ENCODE measurements at regions of chr9 and their contacts with region 1.

Region 1: DNA sequence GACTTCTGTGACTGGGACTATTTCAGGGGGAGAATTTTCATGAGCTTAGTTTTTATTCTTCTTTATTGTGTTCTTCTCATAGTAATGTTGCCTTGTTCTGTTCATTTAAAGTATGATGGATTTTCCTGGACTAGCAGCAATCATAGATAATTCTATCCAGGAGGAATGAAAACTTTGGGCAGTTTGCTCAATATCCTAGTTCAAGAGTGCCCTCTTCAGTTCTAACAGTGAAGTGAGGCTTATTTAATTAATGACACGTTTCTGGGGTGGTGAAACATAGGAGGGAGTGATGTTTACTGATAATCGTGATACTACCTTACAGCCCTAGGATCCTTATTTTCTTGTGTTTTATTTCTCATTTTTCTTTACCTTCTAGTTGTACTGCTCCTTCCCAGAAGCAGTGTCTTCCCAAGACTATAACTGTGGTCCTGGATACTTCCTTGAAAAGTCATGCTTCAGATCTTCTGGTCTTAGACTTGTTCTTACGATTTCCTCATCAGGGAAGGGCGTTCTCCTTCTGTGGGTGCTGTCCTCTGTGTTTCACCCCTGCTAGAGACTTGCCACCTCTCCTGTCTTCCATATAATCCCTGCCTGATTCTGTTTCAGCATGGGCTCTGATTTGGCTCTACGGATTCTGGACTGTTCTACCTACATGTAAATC is 57.4 kb downstream of the CFAP95 start:
- DNase-seq: peak; percentile 37
- H3K4me3 ChIP-seq: no peak overlapping the region
- H3K27ac ChIP-seq: no peak overlapping the region
- H3K4me1 ChIP-seq: no peaks in the 10 kb centered on the region
- H3K27me3 ChIP-seq: no peaks in the 10 kb centered on the region
- CTCF ChIP-seq: peak; percentile 64 to 72

Region 2: GRCh38 chr9:69056191-69056815 is 821.7 kb before region 1 on chr9:
- CTCF ChIA-PET with region 1: no interaction called
- dilution Hi-C with region 1: no loop called
- in situ Hi-C with region 1: loop called in 1 of 2 experiments (anchors 25 kb)
- intact Hi-C with region 1: loop called (anchors 5 kb)
- DNase-seq: no peak
- H3K4me3 ChIP-seq: no peak overlapping the region
- H3K27ac ChIP-seq: no peak overlapping the region
- H3K4me1 ChIP-seq: no peaks in the 10 kb centered on the region
- H3K27me3 ChIP-seq: no peaks in the 10 kb centered on the region
- CTCF ChIP-seq: no peak

Region 3: DNA sequence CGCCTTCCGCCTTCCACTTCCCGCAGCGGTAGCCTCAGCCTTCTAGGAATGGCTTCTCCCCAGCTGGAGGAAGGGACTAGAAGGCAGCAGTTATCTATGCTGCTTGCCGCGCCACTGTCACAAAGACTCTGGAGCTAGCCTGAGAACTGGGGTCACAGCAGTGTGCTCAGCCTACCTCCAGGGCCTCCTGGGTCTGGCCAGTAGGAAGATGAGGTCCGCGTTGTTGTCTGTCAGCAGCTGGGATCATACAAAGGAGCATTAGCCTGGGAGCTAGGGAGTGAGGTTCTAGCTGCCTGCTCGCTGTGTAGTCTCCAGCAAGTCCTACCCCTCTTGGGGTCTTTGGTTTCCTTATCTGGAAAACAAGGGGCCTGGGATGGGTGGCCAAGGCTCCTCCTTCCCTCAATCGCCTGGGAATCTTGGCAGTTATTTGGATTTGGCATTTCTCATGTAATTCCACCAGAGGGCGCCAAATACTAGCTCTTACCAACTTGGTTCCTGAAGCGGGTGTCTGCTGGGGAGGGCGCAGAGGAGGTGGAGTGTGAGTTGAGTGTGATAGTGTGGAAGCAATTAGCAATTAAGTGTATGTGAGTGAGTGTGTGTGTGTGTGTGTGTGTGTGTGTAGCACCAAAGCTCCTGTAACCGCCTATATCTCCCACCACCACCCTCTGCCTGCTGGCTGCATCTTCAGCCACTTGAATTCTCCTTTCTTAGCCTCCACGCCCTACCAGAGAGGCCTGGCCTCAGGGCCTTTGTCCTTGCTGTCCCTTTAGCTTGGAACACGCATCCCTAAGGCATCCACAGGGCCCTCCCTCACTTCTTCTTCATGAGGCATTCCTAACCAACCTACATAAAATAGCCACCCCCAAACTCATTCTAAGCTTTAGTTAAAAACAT is 455.8 kb before region 1 on chr9:
- CTCF ChIA-PET with region 1: interaction called, 5 read pairs
- dilution Hi-C with region 1: no loop called
- in situ Hi-C with region 1: no loop called
- intact Hi-C with region 1: loop called (anchors 1 kb)
- DNase-seq: peak; percentile 47
- H3K4me3 ChIP-seq: no peak overlapping the region
- H3K27ac ChIP-seq: no peak overlapping the region
- H3K4me1 ChIP-seq: no peaks in the 10 kb centered on the region
- H3K27me3 ChIP-seq: peaks cover 4% of the 10 kb centered on the region
- CTCF ChIP-seq: peak; percentile 61 to 74

Region 4: DNA sequence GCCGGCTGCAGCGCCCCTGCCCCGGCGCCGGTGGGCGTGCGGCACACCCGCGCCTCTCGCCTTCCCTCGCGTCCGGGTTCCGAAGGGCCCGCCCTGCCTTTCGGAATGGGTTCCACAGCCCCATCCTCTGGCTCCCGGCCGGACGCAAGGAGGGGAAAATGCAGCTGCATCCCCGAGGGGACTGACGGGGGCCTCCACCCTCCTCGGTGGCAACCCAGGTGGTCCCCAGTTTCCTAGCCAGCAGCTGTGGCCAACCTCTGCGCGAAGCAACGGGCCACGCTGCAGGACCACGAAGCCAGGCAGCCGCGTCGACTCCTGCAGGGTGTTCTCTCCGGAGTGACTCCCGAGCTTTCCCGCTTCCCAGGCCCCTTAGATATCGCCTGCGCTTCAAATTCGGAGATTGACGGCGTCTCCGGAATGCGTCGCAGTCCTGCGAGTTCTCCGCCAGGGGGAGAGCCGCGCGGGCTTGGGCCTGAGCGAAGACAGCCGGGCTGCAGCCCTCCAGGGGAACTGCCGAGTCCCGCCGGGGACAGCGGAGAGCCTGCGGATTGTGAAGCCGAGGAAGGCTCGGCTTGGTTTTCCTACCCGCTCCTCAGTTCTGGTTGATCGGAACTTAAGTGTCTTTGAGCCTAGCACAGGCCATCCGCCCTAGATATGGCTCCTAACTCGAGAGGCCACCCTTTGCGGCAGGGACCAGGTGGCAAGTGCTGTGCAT is 205.2 kb before region 1 on chr9:
- CTCF ChIA-PET with region 1: no interaction called
- dilution Hi-C with region 1: no loop called
- in situ Hi-C with region 1: no loop called
- intact Hi-C with region 1: loop called (anchors 1 kb)
- DNase-seq: peak; percentile 79
- H3K4me3 ChIP-seq: peak overlapping the region; percentile 47 to 71 (median 69)
- H3K27ac ChIP-seq: no peak overlapping the region
- H3K4me1 ChIP-seq: peaks cover 33% of the 10 kb centered on the region
- H3K27me3 ChIP-seq: no peaks in the 10 kb centered on the region
- CTCF ChIP-seq: peak; percentile 70 to 85

Region 5: GRCh38 chr9:69731348-69731747 is 146.6 kb before region 1 on chr9:
- CTCF ChIA-PET with region 1: no interaction called
- dilution Hi-C with region 1: no loop called
- in situ Hi-C with region 1: no loop called
- intact Hi-C with region 1: no loop called
- DNase-seq: no peak
- H3K4me3 ChIP-seq: no peak overlapping the region
- H3K27ac ChIP-seq: no peak overlapping the region
- H3K4me1 ChIP-seq: no peaks in the 10 kb centered on the region
- H3K27me3 ChIP-seq: no peaks in the 10 kb centered on the region
- CTCF ChIP-seq: no peak

Region 6: GRCh38 chr9:69809304-69809863 is 68.6 kb before region 1 on chr9:
- CTCF ChIA-PET with region 1: no interaction called
- dilution Hi-C with region 1: no loop called
- in situ Hi-C with region 1: no loop called
- intact Hi-C with region 1: loop called (anchors 1 kb)
- DNase-seq: peak; percentile 17
- H3K4me3 ChIP-seq: no peak overlapping the region
- H3K27ac ChIP-seq: no peak overlapping the region
- H3K4me1 ChIP-seq: no peaks in the 10 kb centered on the region
- H3K27me3 ChIP-seq: no peaks in the 10 kb centered on the region
- CTCF ChIP-seq: peak; percentile 38 to 41

Region 7: DNA sequence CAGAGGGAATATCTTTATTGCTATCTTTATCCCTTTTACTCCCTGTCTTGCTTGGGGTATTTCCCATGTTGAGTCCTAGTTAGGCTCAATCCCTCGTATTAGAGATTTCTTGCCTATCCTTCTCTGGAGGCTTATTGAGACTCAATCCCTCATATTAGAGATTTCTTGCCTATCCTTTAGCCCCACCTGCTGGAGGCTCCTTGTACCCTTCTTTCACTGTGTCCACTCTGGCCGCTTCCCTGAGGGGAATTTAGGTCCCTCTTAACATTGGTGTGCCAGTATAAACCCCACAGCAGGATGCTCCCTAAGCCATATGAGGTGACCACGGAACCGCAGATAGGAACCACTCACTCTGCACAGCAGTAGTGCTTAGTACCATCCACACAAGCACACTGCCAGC is 54.9 kb after region 1 on chr9:
- CTCF ChIA-PET with region 1: no interaction called
- dilution Hi-C with region 1: no loop called
- in situ Hi-C with region 1: no loop called
- intact Hi-C with region 1: loop called (anchors 5 kb)
- DNase-seq: no peak
- H3K4me3 ChIP-seq: no peak overlapping the region
- H3K27ac ChIP-seq: no peak overlapping the region
- H3K4me1 ChIP-seq: peaks cover 10% of the 10 kb centered on the region
- H3K27me3 ChIP-seq: no peaks in the 10 kb centered on the region
- CTCF ChIP-seq: peak; percentile 35 to 50

Region 8: GRCh38 chr9:70120834-70121510 is 243.0 kb after region 1 on chr9:
- CTCF ChIA-PET with region 1: no interaction called
- dilution Hi-C with region 1: no loop called
- in situ Hi-C with region 1: no loop called
- intact Hi-C with region 1: no loop called
- DNase-seq: peak; percentile 98
- H3K4me3 ChIP-seq: no peak overlapping the region
- H3K27ac ChIP-seq: peak overlapping the region; percentile 72
- H3K4me1 ChIP-seq: peaks cover 66% of the 10 kb centered on the region
- H3K27me3 ChIP-seq: no peaks in the 10 kb centered on the region
- CTCF ChIP-seq: peak in 1 of 2 donors; percentile 46